ENCODE measurements at regions of chr20 and their contacts with region 1.

Region 1: DNA sequence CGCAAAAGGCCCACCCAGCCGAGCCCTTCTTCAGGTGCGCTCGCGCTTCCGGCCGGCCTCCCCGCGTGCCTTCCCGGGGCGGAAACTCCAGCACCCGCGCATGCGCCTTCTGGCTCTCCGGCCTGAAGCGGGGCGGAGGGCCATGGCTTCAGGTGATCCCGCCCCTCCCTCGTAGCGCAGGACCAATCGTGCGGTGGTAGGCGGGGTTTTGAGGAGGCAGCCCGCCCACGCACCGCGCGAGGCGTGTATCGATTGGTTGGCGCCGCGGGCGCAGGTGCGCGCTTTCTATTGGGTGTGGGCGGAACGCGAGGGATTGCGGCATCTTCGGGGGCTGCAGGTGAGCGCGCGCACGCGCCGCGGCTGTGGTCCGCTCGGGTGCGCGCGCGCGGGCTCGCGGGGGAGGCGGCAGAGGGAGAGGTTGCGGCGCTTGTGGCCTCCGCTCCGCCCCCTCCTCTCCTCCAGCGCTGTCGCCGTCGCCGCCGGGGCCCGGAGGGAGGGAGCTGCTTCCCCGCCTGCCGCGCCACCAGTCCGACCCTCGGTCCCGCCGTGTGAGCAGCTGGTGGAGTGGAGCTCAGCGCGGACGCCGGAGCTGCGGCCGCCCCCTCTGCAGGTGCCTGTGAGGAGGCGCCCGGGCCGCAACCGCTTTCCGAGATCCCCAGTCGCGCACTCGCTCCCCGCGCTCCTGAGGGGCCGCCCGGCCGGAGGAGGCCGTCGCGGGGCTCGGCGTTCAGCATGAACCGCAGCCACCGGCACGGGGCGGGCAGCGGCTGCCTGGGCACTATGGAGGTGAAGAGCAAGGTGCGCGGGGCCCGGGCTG is at the start of gene PARD6B:
- DNase-seq: peak; percentile 99
- H3K4me3 ChIP-seq: peak within 1 kb of the TSS; percentile 72 to 84 (median 77)
- H3K27ac ChIP-seq: peak within 1 kb of the TSS; percentile 89 to 92 (median 90)
- H3K4me1 ChIP-seq: peaks cover 7 to 59% (median 16%) of the 10 kb centered on the region in 4 donors
- H3K27me3 ChIP-seq: no peaks in the 10 kb centered on the region
- CTCF ChIP-seq: peak in 1 of 5 experiments; percentile 22
- EP300 ChIP-seq: no peak
- POLR2A ChIP-seq: peak; percentile 80
- total RNA-seq, gene PARD6B: 1.2 to 34.8 (median 17.2) TPM

Region 2: DNA sequence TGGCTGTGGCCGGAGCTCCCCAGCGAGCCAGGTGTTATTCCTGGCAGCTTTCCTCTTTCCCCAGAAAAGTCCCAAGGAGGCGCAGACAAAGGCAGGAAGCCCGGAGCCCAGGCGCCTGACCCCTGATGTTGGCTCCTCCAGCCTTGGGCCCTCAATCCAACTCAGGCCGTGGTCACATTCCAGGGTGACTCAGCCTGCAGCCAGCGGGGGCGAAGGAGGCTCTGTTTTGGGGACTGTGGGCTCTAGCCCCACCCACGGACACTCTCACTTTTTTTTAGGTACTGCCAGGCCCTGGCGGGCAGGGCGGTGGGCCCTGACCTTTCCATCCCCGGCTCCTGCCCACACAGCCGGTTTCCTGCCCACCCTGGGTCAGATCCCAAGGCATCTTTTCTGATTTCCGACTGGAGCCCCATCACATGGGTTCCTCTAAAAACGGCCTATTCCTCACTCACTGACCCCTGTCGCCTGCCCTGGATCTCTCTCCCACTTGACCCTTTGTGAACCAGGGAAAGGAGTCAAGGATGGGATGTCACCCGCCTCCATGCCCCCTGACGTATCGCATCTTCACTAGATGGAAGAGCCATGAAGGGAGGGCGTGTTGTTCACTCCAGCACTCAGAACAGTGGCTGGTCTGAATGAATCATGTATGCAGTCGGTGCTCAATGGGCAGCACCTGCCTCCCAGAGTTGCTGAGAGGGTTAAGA is 1168.8 kb before region 1 on chr20:
- in situ Hi-C with region 1: no loop called
- intact Hi-C with region 1: no loop called
- DNase-seq: peak; percentile 43
- H3K4me3 ChIP-seq: no peak overlapping the region
- H3K27ac ChIP-seq: peak overlapping the region; percentile 48 to 87 (median 70)
- H3K4me1 ChIP-seq: peaks cover 0 to 7% (median 0%) of the 10 kb centered on the region in 4 donors
- H3K27me3 ChIP-seq: peaks cover 24% of the 10 kb centered on the region
- CTCF ChIP-seq: no peak
- EP300 ChIP-seq: no peak
- POLR2A ChIP-seq: no peak

Region 3: GRCh38 chr20:50478162-50479036 is 252.9 kb before region 1 on chr20:
- in situ Hi-C with region 1: loop called in 2 of 4 experiments (anchors 25 kb)
- intact Hi-C with region 1: no loop called
- DNase-seq: peak; percentile 81
- H3K4me3 ChIP-seq: no peak overlapping the region
- H3K27ac ChIP-seq: peak overlapping the region in 1 of 4 donors; percentile 39
- H3K4me1 ChIP-seq: peaks cover 4 to 26% (median 15%) of the 10 kb centered on the region in 4 donors
- H3K27me3 ChIP-seq: no peaks in the 10 kb centered on the region
- CTCF ChIP-seq: peak; percentile 59 to 84 (median 72)
- EP300 ChIP-seq: no peak
- POLR2A ChIP-seq: no peak

Region 4: GRCh38 chr20:50635667-50636503 is 95.4 kb before region 1 on chr20:
- in situ Hi-C with region 1: no loop called
- intact Hi-C with region 1: loop called (anchors 5 kb)
- DNase-seq: peak; percentile 73
- H3K4me3 ChIP-seq: peak overlapping the region in 2 of 4 donors; percentile 3 to 11
- H3K27ac ChIP-seq: peak overlapping the region; percentile 27 to 64 (median 37)
- H3K4me1 ChIP-seq: peaks cover 8 to 22% (median 15%) of the 10 kb centered on the region in 4 donors
- H3K27me3 ChIP-seq: no peaks in the 10 kb centered on the region
- CTCF ChIP-seq: peak; percentile 81 to 91 (median 87)
- EP300 ChIP-seq: no peak
- POLR2A ChIP-seq: no peak